ENCODE measurements at regions of chrX and their contacts with region 1.

Region 1: DNA sequence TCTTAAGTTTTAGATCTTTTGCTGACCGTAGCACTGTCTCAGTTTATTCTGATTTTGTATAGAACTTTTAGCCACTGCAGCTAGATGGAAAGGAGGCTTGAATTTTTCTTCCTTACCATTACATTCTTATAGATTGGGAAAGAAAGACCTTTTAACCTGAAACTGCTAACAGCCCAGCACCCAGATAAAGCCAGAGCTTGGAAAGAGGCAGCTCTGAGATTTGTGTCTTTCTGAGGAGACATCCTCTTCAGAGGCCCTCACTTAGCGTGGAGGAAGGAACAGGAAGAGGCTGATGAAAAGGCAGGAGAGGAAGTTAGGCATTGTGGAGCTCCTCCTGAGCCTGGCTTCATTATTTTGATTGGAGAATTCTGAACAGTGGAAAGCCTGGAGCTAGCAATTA is 35.1 kb downstream of the ATG4A start:
- DNase-seq: no peak
- ATAC-seq: peak; percentile 87
- H3K4me3 Mint-ChIP-seq: no peak overlapping the region
- H3K27ac Mint-ChIP-seq: peak overlapping the region; percentile 74
- H3K4me1 Mint-ChIP-seq: peaks cover 33% of the 10 kb centered on the region
- H3K27me3 Mint-ChIP-seq: no peaks in the 10 kb centered on the region
- CTCF ChIP-seq: no peak

Region 2: GRCh38 chrX:108097380-108097779 is 29.3 kb before region 1 on chrX:
- CTCF ChIA-PET with region 1: no interaction called
- POLR2A ChIA-PET with region 1: no interaction called
- DNase-seq: no peak
- ATAC-seq: no peak
- H3K4me3 Mint-ChIP-seq: no peak overlapping the region
- H3K27ac Mint-ChIP-seq: no peak overlapping the region
- H3K4me1 Mint-ChIP-seq: no peaks in the 10 kb centered on the region
- H3K27me3 Mint-ChIP-seq: peaks cover 4% of the 10 kb centered on the region
- CTCF ChIP-seq: no peak

Region 3: GRCh38 chrX:108138814-108139702 is 12.4 kb after region 1 on chrX:
- CTCF ChIA-PET with region 1: interaction called, 18 read pairs
- POLR2A ChIA-PET with region 1: no interaction called
- DNase-seq: peak; percentile 15
- ATAC-seq: peak; percentile 76
- H3K4me3 Mint-ChIP-seq: no peak overlapping the region
- H3K27ac Mint-ChIP-seq: no peak overlapping the region
- H3K4me1 Mint-ChIP-seq: no peaks in the 10 kb centered on the region
- H3K27me3 Mint-ChIP-seq: no peaks in the 10 kb centered on the region; the same call in 1 of the 2 replicates
- CTCF ChIP-seq: no peak; the same call in 1 of the 2 replicates

Measured in WTC11 (cell line).